ENCODE measurements at regions of chr15 and their contacts with region 1.

Region 1: GRCh38 chr15:56918046-56918938 is at the start of gene TCF12:
- DNase-seq: peak; percentile 83
- ATAC-seq: peak; percentile 85
- H3K4me3 ChIP-seq: peak within 1 kb of the TSS; percentile 90
- H3K27ac ChIP-seq: peak within 1 kb of the TSS; percentile 26
- H3K4me1 ChIP-seq: peaks cover 21% of the 10 kb centered on the region
- H3K27me3 ChIP-seq: no peaks in the 10 kb centered on the region
- CTCF ChIP-seq: peak; percentile 44; the same call in 1 of the 2 replicates
- total RNA-seq, gene TCF12: 78.3 and 103 TPM in 2 replicates

Region 2: DNA sequence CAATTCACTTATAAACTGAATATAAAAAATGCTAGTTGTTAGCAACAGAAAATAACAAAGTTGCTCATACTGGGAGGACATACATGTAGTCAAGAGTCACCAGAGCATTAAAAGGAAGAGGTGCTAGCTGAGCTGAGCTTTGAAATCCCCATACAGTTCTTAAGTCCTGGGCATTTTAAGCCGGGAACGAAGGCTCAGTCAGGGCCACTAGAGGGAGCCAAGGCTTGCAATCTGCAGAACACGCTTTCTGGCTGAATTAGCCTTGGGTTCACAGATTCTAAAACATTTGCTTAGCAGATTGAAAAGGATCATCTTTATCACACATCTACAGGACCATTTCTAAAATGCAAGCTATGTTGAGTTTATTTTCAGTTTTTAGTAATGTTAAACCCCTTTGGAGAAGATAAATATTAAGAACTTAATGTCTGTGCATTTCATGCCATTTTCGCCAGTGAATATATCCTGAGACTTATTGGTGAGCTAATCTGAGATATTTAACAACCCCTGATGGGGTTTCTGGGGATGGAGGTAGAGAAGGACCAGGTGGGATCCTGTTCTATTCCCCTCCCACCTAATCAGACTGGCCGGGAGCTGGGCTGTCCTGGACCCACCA is 427.1 kb before region 1 on chr15:
- CTCF ChIA-PET with region 1: no interaction called
- POLR2A ChIA-PET with region 1: no interaction called
- intact Hi-C with region 1: loop called (anchors 2 kb)
- DNase-seq: peak; percentile 79
- ATAC-seq: peak; percentile 61
- H3K4me3 ChIP-seq: no peak overlapping the region
- H3K27ac ChIP-seq: no peak overlapping the region
- H3K4me1 ChIP-seq: peaks cover 17% of the 10 kb centered on the region; the same call in 1 of the 2 replicates
- H3K27me3 ChIP-seq: no peaks in the 10 kb centered on the region
- CTCF ChIP-seq: peak; percentile 84

Region 3: DNA sequence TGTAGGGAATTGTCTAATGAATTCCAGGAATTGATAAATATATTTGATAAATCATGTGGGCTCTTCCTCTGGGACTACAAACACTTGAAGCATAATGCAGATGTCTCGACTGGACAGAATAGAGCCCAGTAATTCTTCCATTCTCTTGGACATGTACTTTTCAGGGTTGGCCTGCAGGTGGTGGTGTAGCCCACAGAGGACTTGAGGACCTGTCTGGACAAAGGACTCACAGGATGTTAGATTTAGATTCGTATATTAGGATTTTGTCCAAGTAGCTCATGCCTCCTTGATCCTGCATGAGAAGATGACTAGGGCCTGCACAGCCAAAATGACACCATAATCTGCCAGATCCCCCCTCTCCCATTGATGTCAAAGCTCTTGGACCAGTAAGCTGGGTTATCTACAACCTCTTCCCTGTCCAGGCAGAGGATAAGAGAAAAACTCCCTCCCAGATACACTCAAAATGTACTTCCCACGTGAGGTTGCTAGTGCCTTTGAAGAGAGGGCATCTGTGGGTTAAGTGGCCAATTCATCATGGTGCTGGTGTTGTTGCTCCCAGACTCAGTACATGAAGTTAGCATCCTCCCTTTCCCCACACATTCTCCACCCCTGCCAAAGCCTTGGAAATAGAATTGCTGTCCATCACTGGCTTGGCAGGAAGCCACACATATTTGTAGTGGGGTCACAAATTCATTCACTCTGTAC is 96.4 kb before region 1 on chr15:
- CTCF ChIA-PET with region 1: no interaction called
- POLR2A ChIA-PET with region 1: no interaction called
- intact Hi-C with region 1: loop called (anchors 10 kb)
- DNase-seq: peak; percentile 69
- ATAC-seq: peak; percentile 83
- H3K4me3 ChIP-seq: no peak overlapping the region
- H3K27ac ChIP-seq: no peak overlapping the region
- H3K4me1 ChIP-seq: peaks cover 11% of the 10 kb centered on the region
- H3K27me3 ChIP-seq: no peaks in the 10 kb centered on the region
- CTCF ChIP-seq: peak; percentile 77

Region 4: DNA sequence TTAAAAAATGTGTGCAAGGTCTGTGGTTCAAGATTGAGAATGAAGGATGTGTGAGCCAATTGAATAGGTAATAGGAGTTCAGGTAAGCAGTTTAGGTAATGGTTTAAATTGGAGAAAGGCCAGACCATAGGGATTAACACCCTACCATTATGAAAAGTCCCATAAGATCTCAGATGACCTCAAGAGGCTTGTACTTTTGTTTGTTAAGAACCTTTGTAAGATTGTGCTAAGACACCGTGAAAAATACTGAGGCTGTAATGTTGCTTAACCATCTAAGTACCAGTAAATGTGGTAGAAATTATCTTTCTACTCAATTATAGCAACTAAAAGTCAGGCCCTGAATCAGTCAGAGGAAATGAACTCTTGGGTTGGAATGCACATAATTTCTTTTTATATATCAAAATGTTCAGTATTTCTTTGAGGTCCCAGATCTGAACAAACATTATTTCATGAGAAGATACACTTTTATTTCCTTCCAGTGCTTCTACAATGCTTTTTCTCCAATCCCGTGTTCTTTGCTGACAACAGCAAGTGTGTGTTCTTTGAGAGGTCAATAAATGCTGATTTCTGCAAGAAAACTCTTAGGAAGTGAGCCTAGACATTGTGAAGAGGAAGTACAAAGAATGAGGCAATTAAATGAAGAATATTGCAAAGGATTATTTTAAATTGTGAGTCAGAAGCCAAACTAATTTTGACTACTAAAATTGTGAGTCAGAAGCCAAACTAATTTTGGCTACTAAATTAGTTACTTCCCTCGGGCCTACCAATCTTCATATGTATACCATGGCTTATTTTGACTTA is 66.6 kb after region 1 on chr15:
- CTCF ChIA-PET with region 1: no interaction called
- POLR2A ChIA-PET with region 1: no interaction called
- intact Hi-C with region 1: loop called (anchors 5 kb)
- DNase-seq: peak; percentile 50
- ATAC-seq: peak; percentile 75
- H3K4me3 ChIP-seq: no peak overlapping the region
- H3K27ac ChIP-seq: peak overlapping the region; percentile 59
- H3K4me1 ChIP-seq: peaks cover 43% of the 10 kb centered on the region
- H3K27me3 ChIP-seq: no peaks in the 10 kb centered on the region
- CTCF ChIP-seq: no peak

Region 5: GRCh38 chr15:57146506-57147201 is 228.4 kb after region 1 on chr15:
- CTCF ChIA-PET with region 1: no interaction called
- POLR2A ChIA-PET with region 1: no interaction called
- intact Hi-C with region 1: loop called (anchors 5 kb)
- DNase-seq: peak; percentile 63
- ATAC-seq: peak; percentile 46; the same call in 1 of the 2 replicates
- H3K4me3 ChIP-seq: 0 out of 2 replicates have a peak overlapping the region, but pooled peaks have one; percentile 16
- H3K27ac ChIP-seq: no peak overlapping the region
- H3K4me1 ChIP-seq: no peaks in the 10 kb centered on the region
- H3K27me3 ChIP-seq: no peaks in the 10 kb centered on the region
- CTCF ChIP-seq: peak; percentile 72